Endothelial cell of umbilical vein (primary cell): ENCODE measurements at regions of chr16 and their contacts with region 1.

Region 1: GRCh38 chr16:87062569-87063442 is 254.4 kb downstream of the C16orf95 start:
- DNase-seq: peak; percentile 88
- H3K4me3 ChIP-seq: peak overlapping the region; percentile 24 to 93 (median 43)
- H3K27ac ChIP-seq: peak overlapping the region; percentile 92
- H3K4me1 ChIP-seq: peaks cover 49% of the 10 kb centered on the region
- H3K27me3 ChIP-seq: no peaks in the 10 kb centered on the region
- CTCF ChIP-seq: peak; percentile 80 to 83
- POLR2A ChIP-seq: no peak

Region 2: GRCh38 chr16:86563489-86564345 is 499.1 kb before region 1 on chr16:
- CTCF ChIA-PET with region 1: interaction called, 283 read pairs
- POLR2A ChIA-PET with region 1: interaction called, 6 read pairs
- dilution Hi-C with region 1: no loop called
- intact Hi-C with region 1: loop called (anchors 1 kb)
- DNase-seq: peak; percentile 92
- H3K4me3 ChIP-seq: peak overlapping the region; percentile 28 to 99 (median 39)
- H3K27ac ChIP-seq: peak overlapping the region; percentile 78
- H3K4me1 ChIP-seq: peaks cover 18% of the 10 kb centered on the region
- H3K27me3 ChIP-seq: no peaks in the 10 kb centered on the region
- CTCF ChIP-seq: peak; percentile 99 to 100
- POLR2A ChIP-seq: no peak

Region 3: GRCh38 chr16:86740906-86741799 is 321.7 kb before region 1 on chr16:
- CTCF ChIA-PET with region 1: interaction called, 4 read pairs
- POLR2A ChIA-PET with region 1: no interaction called
- dilution Hi-C with region 1: no loop called
- intact Hi-C with region 1: loop called (anchors 1 kb)
- DNase-seq: peak; percentile 92
- H3K4me3 ChIP-seq: peak overlapping the region in 2 of 3 experiments; percentile 15 to 31
- H3K27ac ChIP-seq: peak overlapping the region; percentile 96
- H3K4me1 ChIP-seq: peaks cover 19% of the 10 kb centered on the region
- H3K27me3 ChIP-seq: no peaks in the 10 kb centered on the region
- CTCF ChIP-seq: no peak
- POLR2A ChIP-seq: peak; percentile 75

Region 4: DNA sequence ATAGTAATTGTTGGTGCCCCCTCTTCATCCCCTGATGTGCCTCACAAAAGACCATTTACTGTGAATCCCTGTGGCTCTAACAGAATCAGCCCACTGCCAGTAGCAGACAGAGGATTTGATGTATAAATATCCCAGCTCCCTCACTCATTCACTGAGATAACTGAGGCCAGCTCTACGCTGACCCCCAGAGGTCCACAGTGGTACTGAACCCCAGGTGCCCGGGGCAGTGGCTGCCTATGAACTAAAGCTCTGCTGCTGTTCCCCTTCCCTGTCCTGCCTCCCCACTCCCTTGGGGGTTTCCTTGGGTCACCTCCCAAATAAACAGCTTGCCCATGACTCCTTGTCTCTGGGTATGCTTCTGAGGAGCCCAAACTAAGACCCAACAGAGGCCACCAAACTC is 188.7 kb before region 1 on chr16:
- CTCF ChIA-PET with region 1: interaction called, 34 read pairs
- POLR2A ChIA-PET with region 1: no interaction called
- dilution Hi-C with region 1: no loop called
- intact Hi-C with region 1: loop called (anchors 1 kb)
- DNase-seq: peak; percentile 60
- H3K4me3 ChIP-seq: no peak overlapping the region
- H3K27ac ChIP-seq: no peak overlapping the region
- H3K4me1 ChIP-seq: no peaks in the 10 kb centered on the region
- H3K27me3 ChIP-seq: no peaks in the 10 kb centered on the region
- CTCF ChIP-seq: peak; percentile 80 to 81
- POLR2A ChIP-seq: no peak

Region 5: DNA sequence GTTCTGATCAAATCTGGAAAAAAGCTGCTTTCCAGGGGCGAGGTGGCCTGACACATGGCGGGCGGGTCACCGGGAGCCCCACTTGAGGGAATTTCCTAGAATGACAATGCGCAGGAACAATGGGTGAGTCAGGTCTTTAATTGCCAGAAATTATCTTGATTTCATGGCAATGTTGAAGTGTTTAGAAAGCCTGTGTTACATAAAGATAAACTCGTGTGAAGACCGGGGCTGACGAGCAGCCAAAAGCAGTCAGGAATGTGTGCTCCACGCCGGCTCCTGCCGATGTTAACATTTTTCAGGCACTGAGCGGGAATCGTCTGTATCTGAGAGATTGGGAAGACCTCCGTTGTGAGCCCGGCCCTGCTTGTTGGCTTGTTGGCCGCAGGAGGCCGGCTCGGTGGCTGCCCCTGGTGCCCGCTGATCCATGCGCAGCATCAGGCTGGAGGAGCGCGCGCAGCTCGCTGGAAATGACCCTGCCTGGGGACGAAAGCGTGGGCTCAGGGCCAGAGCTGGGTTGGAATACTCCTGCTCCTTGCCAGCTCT is 131.3 kb before region 1 on chr16:
- CTCF ChIA-PET with region 1: interaction called, 17 read pairs
- POLR2A ChIA-PET with region 1: no interaction called
- dilution Hi-C with region 1: no loop called
- intact Hi-C with region 1: loop called (anchors 1 kb)
- DNase-seq: peak; percentile 98
- H3K4me3 ChIP-seq: no peak overlapping the region
- H3K27ac ChIP-seq: peak overlapping the region; percentile 91
- H3K4me1 ChIP-seq: peaks cover 49% of the 10 kb centered on the region
- H3K27me3 ChIP-seq: no peaks in the 10 kb centered on the region
- CTCF ChIP-seq: peak in 1 of 2 donors; percentile 32
- POLR2A ChIP-seq: peak; percentile 68

Region 6: GRCh38 chr16:87178977-87179376 is 116.2 kb after region 1 on chr16:
- CTCF ChIA-PET with region 1: interaction called, 4 read pairs
- POLR2A ChIA-PET with region 1: no interaction called
- dilution Hi-C with region 1: no loop called
- intact Hi-C with region 1: loop called (anchors 1 kb)
- DNase-seq: peak; percentile 97
- H3K4me3 ChIP-seq: no peak overlapping the region
- H3K27ac ChIP-seq: peak overlapping the region; percentile 77
- H3K4me1 ChIP-seq: peaks cover 24% of the 10 kb centered on the region
- H3K27me3 ChIP-seq: no peaks in the 10 kb centered on the region
- CTCF ChIP-seq: no peak
- POLR2A ChIP-seq: peak; percentile 45

Region 7: GRCh38 chr16:87223656-87224248 is 160.9 kb after region 1 on chr16:
- CTCF ChIA-PET with region 1: no interaction called
- POLR2A ChIA-PET with region 1: no interaction called
- dilution Hi-C with region 1: no loop called
- intact Hi-C with region 1: no loop called
- DNase-seq: no peak
- H3K4me3 ChIP-seq: no peak overlapping the region
- H3K27ac ChIP-seq: no peak overlapping the region
- H3K4me1 ChIP-seq: no peaks in the 10 kb centered on the region
- H3K27me3 ChIP-seq: peaks cover 4% of the 10 kb centered on the region in 2 experiments
- CTCF ChIP-seq: no peak
- POLR2A ChIP-seq: no peak

Region 8: DNA sequence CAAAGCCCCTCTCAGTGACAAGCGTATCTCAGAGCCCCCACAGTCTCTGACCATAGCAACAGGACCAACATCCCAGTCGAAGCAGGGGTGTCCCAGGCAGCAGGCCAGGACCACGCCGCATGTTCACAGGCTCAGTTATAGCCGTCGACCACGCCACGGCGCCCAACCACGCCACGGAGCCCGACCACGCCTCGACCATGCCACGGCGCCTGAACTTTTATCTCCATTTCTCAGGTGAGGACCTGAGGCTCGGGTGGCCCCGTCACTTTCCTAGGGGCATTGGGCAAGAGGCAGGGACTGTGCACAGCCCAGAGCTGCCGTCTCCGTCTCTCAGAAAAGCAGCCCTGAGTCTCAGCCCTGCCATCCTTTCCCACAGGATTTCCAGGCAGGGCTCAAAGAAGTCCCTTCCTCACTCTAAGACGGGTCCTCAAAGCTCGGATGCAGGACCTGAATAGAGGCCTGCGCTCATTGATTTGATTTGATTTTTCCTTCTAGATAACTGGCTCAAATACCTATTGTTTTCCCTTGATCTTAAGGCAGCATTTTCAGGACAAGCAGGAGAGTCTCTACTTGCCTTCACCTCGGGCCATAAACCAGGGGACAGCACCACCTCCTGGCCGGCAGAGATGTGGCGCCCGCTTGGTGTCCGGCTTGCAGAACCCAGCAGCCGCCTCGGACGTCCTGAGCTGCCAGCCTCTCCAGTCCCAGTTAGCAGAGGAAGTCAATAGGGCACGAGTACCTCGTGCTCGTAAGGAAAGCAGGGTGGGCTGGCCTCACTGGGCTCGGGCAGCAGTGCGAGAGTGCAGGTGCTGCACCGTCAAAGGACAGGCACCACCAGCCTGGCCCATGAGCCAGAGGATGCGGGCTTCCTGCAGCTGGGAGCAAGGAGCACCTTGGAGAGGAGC is 215.6 kb after region 1 on chr16:
- CTCF ChIA-PET with region 1: interaction called, 29 read pairs
- POLR2A ChIA-PET with region 1: no interaction called
- dilution Hi-C with region 1: no loop called
- intact Hi-C with region 1: loop called (anchors 1 kb)
- DNase-seq: peak; percentile 86
- H3K4me3 ChIP-seq: no peak overlapping the region
- H3K27ac ChIP-seq: no peak overlapping the region
- H3K4me1 ChIP-seq: peaks cover 4% of the 10 kb centered on the region
- H3K27me3 ChIP-seq: no peaks in the 10 kb centered on the region
- CTCF ChIP-seq: peak; percentile 92 to 94
- POLR2A ChIP-seq: no peak